ENCODE measurements at regions of chr3 and their contacts with region 1.

Region 1: DNA sequence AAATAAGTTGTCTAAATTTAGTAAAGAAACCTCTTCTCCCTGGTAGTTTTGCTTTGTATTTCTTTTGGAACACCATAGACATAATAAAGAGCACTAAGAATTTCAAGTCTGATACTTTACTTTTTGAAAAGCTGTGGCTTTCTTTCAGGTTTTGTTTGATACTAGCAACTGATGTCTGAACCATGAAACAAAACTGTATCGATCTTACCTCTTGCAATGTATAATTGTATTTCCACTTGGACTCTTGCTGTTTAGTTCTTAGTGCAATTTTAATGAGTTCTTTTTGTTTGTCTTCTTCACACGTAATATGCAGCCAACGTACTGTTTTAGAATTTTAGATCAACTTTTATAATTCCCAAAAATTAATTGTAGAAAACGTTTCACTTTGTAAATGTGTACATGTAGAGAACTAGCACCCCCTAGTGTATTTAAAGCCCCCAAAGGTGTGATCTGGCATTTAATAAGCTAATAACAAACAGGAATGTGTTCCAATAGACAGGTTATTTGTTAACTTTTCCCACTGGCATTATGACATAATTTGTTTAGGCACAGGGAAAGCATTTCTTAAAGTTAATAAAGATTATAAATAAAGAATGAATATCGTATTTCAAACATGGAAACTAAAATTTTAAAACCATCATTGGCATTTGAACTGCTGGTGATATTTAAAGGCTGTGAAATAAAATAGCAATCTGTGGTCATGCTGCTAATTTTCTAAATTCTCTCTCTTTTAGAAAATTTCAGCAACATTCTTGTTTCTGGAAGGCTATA is 289.1 kb upstream of the DNAJC19 start:
- DNase-seq: no peak
- ATAC-seq: no peak
- H3K4me3 Mint-ChIP-seq: no peak overlapping the region
- H3K27ac Mint-ChIP-seq: no peak overlapping the region
- H3K4me1 Mint-ChIP-seq: no peaks in the 10 kb centered on the region
- H3K27me3 Mint-ChIP-seq: no peaks in the 10 kb centered on the region
- CTCF ChIP-seq: 0 out of 2 replicates have a peak, but pooled peaks have one; percentile 20

Region 2: GRCh38 chr3:181210275-181210674 is 68.4 kb before region 1 on chr3:
- CTCF ChIA-PET with region 1: interaction called, 35 read pairs
- POLR2A ChIA-PET with region 1: no interaction called
- DNase-seq: no peak
- ATAC-seq: no peak
- H3K4me3 Mint-ChIP-seq: no peak overlapping the region
- H3K27ac Mint-ChIP-seq: no peak overlapping the region
- H3K4me1 Mint-ChIP-seq: no peaks in the 10 kb centered on the region
- H3K27me3 Mint-ChIP-seq: no peaks in the 10 kb centered on the region
- CTCF ChIP-seq: no peak

Region 3: DNA sequence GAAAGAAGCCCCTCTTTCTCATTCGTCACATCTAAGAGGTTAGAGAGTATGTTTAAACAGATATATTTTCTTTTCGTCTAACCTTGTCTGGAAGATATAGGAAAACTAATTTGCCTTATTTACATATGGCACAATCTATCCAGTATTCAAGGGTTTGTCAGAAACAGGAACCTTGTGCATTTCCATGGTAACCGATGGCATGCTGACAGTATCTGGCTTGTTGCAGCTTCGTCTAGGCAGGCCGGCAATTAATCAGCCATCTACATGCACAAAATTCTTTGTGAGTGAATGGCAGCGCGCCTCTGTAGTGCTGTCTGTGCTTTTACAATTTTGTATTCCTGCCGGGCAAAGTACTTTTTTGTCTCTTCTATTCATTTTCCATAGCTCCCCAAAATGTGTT is 139.1 kb after region 1 on chr3:
- CTCF ChIA-PET with region 1: no interaction called
- POLR2A ChIA-PET with region 1: no interaction called
- DNase-seq: no peak
- ATAC-seq: peak; percentile 44; the same call in 1 of the 2 replicates
- H3K4me3 Mint-ChIP-seq: no peak overlapping the region
- H3K27ac Mint-ChIP-seq: no peak overlapping the region
- H3K4me1 Mint-ChIP-seq: peaks cover 22% of the 10 kb centered on the region
- H3K27me3 Mint-ChIP-seq: no peaks in the 10 kb centered on the region
- CTCF ChIP-seq: no peak